ENCODE measurements at regions of chr5 and their contacts with region 1.

Region 1: GRCh38 chr5:103119765-103120606 is at the starts of genes GIN1 and PPIP5K2:
- DNase-seq: peak; percentile 90 to 98
- H3K4me3 ChIP-seq: peak within 1 kb of the TSS; percentile 84 to 92
- H3K27ac ChIP-seq: peak within 1 kb of the TSS; percentile 89 to 93
- H3K4me1 ChIP-seq: peaks cover 0 to 18% of the 10 kb centered on the region in 2 donors
- H3K27me3 ChIP-seq: no peaks in the 10 kb centered on the region
- CTCF ChIP-seq: no peak
- total RNA-seq, gene GIN1: 0.21 TPM
- total RNA-seq, gene PPIP5K2: 33.2 TPM

Region 2: DNA sequence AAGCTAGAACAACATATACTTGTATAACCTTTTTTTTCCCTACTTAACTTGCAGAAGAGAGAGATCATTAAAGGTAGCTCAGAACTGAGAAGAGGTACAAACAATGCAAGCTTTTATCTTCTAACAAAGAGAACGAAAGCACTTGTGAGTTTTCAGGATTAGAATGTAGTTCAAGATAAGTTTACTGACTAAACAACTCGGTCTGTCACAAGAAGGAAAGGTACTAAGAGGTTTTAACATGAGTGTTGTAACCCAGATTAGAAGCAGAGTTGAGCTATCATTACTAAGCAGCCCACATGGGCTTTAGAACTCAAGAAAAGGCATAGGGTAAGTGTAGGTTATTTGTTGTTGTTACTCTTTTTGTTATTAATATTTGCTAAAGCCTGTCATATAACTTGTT is 25.2 kb before region 1 on chr5:
- intact Hi-C with region 1: loop called (anchors 2 kb)
- DNase-seq: no peak
- H3K4me3 ChIP-seq: no peak overlapping the region
- H3K27ac ChIP-seq: peak overlapping the region; percentile 79 to 88
- H3K4me1 ChIP-seq: peaks cover 12 to 22% of the 10 kb centered on the region in 2 donors
- H3K27me3 ChIP-seq: no peaks in the 10 kb centered on the region
- CTCF ChIP-seq: no peak

Region 3: GRCh38 chr5:103108086-103108485 is 11.9 kb before region 1 on chr5:
- intact Hi-C with region 1: no loop called
- DNase-seq: no peak
- H3K4me3 ChIP-seq: no peak overlapping the region
- H3K27ac ChIP-seq: no peak overlapping the region
- H3K4me1 ChIP-seq: no peaks in the 10 kb centered on the region
- H3K27me3 ChIP-seq: no peaks in the 10 kb centered on the region
- CTCF ChIP-seq: no peak

Region 4: DNA sequence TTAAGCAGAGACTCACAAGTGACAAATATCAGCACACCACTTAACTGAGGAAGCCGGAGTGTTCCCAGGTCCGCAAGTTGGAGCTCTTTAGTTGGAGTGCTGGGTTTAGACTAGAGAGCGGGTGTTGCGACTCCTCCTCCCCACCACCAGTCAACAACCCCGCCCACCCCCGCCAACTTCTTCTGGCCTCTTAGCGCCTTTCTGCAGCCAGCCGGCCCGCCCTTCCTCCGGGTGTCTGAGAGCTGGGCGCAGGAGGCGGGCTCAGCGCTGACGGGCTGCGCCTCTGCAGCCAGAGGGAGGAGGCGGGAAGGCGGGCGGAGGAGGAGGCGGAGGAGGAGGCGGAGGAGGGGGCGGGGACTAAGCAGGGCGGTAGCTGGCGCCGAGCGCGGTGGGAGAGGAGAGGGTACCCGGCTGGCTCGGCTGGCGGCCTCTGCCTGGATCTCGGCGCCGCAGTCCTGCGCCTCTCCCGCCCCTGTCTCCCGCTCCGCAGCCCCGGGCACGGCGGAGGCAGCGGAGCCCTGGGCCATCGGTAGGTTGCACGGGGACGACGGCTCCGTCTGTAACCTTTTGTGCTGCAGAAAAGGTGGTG is 138.5 kb after region 1 on chr5 and contains the start of gene MACIR:
- intact Hi-C with region 1: loop called (anchors 2 kb)
- DNase-seq: peak; percentile 86 to 98
- H3K4me3 ChIP-seq: peak within 1 kb of the TSS; percentile 77 to 89
- H3K27ac ChIP-seq: peak within 1 kb of the TSS; percentile 73 to 79
- H3K4me1 ChIP-seq: peaks cover 0 to 23% of the 10 kb centered on the region in 2 donors
- H3K27me3 ChIP-seq: no peaks in the 10 kb centered on the region
- CTCF ChIP-seq: no peak
- total RNA-seq, gene MACIR: 0.53 TPM

Region 5: GRCh38 chr5:103562453-103563157 is 442.6 kb after region 1 on chr5 and contains the start of gene NUDT12:
- intact Hi-C with region 1: loop called (anchors 5 kb)
- DNase-seq: peak; percentile 8 to 81
- H3K4me3 ChIP-seq: peak within 1 kb of the TSS; percentile 66 to 75
- H3K27ac ChIP-seq: peak within 1 kb of the TSS; percentile 77 to 93
- H3K4me1 ChIP-seq: no peaks in the 10 kb centered on the region
- H3K27me3 ChIP-seq: no peaks in the 10 kb centered on the region
- CTCF ChIP-seq: no peak
- total RNA-seq, gene NUDT12: 6.3 TPM

Measured in ascending aorta (tissue), 2 donors.